Left cardiac atrium (tissue), 4 donors: ENCODE measurements at regions of chr1 and their contacts with region 1.

Region 1: DNA sequence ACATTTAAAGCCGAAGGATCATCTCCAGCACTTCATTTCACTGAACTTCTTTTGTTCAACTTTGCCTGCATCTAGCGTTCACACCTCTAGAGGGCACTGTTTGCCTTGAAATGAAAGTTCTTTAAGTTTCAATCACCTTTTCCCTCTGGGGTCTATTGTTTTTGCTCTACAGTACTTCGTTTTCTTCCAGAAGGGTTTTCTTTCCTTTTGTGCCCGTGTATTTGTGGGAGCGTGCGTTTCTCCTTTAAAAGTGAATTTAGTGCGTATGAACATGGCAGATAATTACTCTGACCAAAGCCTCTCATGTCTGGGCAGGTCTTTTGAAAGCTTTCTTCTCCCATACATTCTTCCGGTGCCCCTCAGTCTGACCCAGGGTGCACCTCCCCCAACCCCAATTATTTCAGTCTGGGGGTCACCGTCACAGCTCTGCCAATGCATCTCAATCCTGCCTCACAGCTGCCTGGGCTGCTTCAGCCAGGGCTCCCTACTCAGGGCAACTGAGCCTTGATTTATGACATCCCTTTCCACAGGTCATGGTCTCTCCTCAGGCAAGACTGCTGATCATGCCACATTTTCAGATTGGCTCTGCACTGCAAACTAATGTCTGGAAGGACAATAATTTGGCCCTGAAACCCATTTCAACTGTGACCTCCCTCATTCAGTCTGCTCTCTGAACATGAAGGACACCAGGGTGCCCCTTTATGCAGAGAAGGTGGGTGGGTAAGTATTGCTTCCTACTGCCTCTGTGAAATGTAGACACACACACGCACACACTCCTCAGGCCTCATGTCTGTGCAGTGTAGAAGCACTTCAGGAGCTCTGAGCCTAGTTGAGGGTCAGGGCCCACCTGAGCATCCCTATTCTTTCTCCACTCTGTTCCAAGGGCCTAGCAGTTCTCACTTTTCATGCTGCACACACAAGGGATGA is 88.6 kb downstream of the NUF2 start:
- DNase-seq: no peak
- ATAC-seq: no peak

Region 2: DNA sequence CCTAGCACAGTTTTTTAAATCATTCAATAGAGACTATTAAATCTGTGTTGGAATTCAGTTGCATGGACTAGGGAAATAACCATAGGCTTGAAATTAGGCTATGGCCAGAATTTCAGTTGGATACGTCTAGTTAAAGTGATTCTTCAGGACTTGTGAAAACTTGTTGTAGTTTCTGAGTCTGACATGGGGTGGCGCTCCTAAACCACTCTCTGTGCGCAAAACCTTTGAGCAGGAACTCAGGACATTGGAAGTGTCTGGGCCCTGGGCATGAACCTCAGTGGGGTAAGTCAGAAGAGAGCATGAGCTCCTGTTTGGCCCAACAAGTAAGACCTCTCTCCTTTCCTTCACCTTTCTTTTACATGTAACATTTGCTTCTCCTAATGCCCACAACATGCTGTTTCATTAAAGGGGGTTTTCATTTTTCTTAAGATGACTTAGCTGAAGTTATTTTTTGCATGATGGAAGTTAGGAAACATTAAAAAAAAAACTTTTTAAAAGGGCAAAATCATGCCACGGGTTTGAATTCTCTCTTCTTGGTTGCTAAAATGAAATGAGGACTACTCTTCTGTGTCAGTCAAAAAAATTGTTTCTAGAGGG is 532.2 kb before region 1 on chr1:
- intact Hi-C with region 1: no loop called
- DNase-seq: peak; percentile 53
- ATAC-seq: peak; percentile 77 to 84

Region 3: DNA sequence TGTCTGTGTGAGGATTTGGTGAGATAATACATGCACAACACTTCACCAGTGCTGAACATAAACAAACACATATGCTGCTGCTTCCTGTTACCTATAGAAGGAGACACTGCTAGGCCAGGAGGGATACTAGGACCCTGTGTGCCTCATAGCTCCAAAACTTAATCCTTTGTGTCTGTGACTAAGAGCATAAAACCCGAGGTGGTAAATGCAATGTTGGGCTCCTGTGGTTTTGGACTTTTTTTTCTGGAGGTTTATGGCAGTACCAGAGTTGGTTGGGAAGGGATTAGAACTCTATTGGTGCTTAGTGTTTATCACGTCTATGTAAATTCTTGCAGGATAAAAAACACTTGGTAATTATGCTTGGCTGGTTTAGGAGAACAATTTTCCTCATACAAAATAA is 34.3 kb after region 1 on chr1:
- intact Hi-C with region 1: no loop called
- DNase-seq: no peak
- ATAC-seq: no peak

Region 4: GRCh38 chr1:163512349-163512989 is 102.1 kb after region 1 on chr1:
- intact Hi-C with region 1: no loop called
- DNase-seq: no peak
- ATAC-seq: no peak

Region 5: DNA sequence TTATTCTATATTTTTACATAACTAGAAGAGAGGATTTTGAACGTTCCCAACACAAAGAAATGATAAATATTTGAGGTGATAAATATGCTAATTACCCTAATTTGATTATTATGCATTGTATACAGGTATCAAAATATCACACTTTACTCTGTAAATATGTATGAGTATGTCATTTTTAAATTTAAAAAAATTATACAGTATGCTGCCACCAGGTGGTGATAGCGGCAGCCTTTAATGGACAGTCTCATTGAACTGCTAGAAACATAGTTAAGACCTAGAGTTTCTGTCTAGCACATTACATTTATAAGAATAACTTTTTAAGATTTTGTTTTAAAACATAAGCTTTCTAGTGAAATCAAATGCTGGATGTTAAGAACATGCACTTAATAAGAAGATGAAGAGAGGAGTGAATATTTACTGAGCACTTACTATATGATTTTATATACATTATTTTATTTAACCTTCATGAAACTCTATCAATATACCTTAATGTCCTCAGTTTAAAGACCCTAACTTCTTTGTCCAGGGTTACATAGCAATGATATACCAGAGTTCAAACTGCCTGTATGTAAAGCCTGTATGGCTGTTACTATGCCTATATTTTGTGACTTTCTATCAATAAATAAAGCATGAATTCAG is 118.5 kb after region 1 on chr1:
- intact Hi-C with region 1: loop called in 1 of 2 experiments (anchors 5 kb)
- DNase-seq: peak; percentile 29
- ATAC-seq: peak in 1 of 2 donors; percentile 47